Right cardiac atrium (tissue), 5 donors: ENCODE measurements at regions of chr1 and their contacts with region 1.

Region 1: GRCh38 chr1:108643492-108644335 is 17.2 kb downstream of the HENMT1 start:
- DNase-seq: peak in 2 of 3 donors; percentile 23 to 50
- ATAC-seq: peak; percentile 60 to 72
- H3K4me3 ChIP-seq: no peak overlapping the region
- H3K27ac ChIP-seq: no peak overlapping the region
- H3K4me1 ChIP-seq: no peaks in the 10 kb centered on the region
- H3K27me3 ChIP-seq: no peaks in the 10 kb centered on the region

Region 2: DNA sequence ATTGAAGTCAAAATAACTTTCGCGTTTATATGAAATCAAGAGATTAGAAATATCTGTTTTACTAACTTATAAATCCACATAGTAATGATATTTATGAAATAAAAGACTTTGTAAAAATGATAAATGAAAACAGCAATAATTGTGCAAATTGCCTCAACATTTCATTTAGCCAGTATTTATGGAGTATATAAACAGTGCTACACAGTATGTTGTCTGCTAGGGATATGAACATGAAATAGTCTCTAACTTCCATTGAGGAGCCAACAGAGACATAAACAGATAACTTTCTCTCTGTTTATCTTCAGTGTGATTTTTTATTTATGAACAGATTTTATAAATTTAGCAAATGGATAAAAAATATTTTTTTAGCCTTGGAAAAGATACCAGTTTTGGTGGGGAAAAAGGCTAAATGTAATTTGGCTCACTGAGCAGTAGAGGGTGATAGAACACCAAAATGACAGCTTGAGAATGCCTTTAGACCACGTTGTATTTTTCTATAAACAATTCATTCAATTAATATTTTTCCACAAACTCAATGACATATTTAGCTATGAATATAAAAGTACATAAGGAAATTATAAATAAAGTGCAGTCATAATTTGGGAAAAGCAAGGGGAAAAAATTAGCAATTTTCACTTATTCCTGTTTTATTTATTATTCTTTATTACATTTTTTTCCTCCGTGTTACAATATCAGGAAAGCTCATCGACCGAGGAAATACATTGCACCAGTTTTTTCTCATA is 131.3 kb before region 1 on chr1:
- intact Hi-C with region 1: loop called (anchors 1 to 10 kb)
- DNase-seq: no peak
- ATAC-seq: no peak
- H3K4me3 ChIP-seq: no peak overlapping the region
- H3K27ac ChIP-seq: no peak overlapping the region
- H3K4me1 ChIP-seq: no peaks in the 10 kb centered on the region
- H3K27me3 ChIP-seq: no peaks in the 10 kb centered on the region

Region 3: DNA sequence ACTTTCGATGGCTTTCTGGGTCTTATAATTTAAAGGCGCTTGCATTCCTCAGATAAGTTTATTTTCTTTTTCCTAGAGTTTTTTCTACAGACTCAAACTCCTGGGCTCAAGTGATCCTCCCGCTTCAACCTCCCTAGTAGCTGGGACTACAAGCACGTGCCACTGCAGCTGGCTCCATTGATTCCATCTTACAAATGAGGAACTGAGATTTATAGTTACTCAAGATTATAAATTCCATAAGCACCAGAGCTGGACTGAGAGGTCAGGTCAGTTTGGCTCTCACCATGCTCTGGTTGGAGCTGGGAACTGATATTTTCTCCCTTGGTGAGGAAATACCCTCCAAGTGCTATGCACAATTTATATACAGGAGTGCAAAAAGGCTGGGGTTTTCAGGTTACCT is 35.0 kb after region 1 on chr1:
- intact Hi-C with region 1: no loop called
- DNase-seq: no peak
- ATAC-seq: no peak
- H3K4me3 ChIP-seq: no peak overlapping the region
- H3K27ac ChIP-seq: no peak overlapping the region
- H3K4me1 ChIP-seq: no peaks in the 10 kb centered on the region
- H3K27me3 ChIP-seq: no peaks in the 10 kb centered on the region